Activated CD8-positive, alpha-beta T cell treated with anti-CD3 and anti-CD28 coated beads for 36 hours (primary cell): ENCODE measurements at regions of chr4 and their contacts with region 1.

Region 1: GRCh38 chr4:8176547-8177399 is 18.2 kb upstream of the ABLIM2 start:
- DNase-seq: peak; percentile 63
- ATAC-seq: peak; percentile 96
- H3K4me3 Mint-ChIP-seq: no peak overlapping the region
- H3K27ac Mint-ChIP-seq: no peak overlapping the region
- H3K4me1 Mint-ChIP-seq: peaks cover 9% of the 10 kb centered on the region
- H3K27me3 Mint-ChIP-seq: peaks cover 2% of the 10 kb centered on the region
- CTCF ChIP-seq: peak; percentile 78

Region 2: DNA sequence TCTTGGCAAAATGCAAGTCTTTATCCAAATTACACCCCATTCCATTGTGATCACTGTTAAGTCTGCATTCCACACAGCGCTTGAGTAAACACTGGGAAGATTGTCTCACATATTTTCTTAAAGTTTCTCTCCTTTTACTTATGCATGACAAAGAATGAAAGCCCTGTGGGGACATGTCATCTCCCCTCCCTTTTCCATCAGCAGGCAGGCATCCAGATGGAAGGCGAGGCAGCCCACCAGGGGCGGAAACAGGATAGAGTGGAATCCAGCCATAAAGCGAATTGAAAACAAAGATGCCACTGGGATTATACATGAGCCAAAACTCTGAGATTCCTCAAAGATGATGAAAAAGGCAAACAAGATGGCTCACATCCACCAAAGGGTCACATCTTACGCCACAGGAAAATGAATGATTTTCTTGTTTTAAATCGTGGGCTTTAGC is 315.3 kb before region 1 on chr4:
- CTCF ChIA-PET with region 1: no interaction called
- POLR2A ChIA-PET with region 1: no interaction called
- intact Hi-C with region 1: no loop called
- DNase-seq: no peak
- ATAC-seq: no peak
- H3K4me3 Mint-ChIP-seq: no peak overlapping the region
- H3K27ac Mint-ChIP-seq: no peak overlapping the region
- H3K4me1 Mint-ChIP-seq: peaks cover 29% of the 10 kb centered on the region
- H3K27me3 Mint-ChIP-seq: no peaks in the 10 kb centered on the region
- CTCF ChIP-seq: no peak

Region 3: DNA sequence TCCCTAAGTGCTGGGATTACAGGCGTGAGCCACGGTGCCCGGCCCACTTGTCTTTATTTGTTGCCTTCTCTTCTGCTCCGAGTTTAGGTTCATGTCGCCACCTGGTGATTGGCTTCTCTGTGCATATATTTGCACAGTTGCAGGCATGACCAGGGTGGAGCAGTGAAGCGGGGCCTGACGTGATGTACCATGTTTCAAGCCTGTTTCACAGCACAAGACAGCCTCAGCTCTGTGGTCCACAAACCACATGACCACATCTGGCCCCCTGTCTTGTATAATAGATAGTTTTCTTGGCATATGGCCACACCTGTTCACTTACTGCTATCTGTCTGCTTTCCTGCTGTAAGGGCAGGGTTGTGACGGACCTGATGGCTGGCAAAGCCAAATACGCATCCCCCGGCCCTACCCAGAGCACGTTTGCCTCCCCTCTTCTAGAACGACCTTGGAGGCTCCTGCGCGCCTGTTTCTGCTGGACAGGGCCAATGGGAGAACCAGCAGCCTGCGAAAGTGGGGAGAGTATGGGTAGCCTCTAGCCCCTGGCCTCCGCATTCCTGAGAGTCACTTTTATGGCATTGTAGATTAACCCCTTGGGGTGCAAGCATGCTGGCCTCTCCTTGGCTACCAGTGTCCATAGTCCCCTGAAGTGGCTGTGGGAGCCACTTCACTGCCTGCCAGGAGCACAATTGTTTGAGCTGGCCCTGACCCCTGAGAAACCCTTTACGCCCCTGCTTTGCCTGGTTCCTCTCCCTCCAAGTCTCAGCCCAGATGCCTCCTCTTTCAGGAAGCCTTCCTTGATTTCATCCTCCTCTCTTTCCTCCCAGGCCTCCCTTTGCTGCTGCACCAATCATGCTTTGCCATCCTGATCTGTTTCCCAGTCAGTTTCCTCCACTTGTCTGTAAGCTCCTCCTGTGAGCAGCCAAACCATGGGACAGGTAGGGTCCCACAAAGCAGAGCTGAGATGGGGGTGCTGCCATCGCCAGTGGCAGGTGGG is 16.3 kb after region 1 on chr4:
- CTCF ChIA-PET with region 1: interaction called, 27 read pairs
- POLR2A ChIA-PET with region 1: no interaction called
- intact Hi-C with region 1: no loop called
- DNase-seq: peak; percentile 69
- ATAC-seq: peak; percentile 90
- H3K4me3 Mint-ChIP-seq: no peak overlapping the region
- H3K27ac Mint-ChIP-seq: no peak overlapping the region
- H3K4me1 Mint-ChIP-seq: peaks cover 2% of the 10 kb centered on the region
- H3K27me3 Mint-ChIP-seq: no peaks in the 10 kb centered on the region
- CTCF ChIP-seq: no peak

Region 4: DNA sequence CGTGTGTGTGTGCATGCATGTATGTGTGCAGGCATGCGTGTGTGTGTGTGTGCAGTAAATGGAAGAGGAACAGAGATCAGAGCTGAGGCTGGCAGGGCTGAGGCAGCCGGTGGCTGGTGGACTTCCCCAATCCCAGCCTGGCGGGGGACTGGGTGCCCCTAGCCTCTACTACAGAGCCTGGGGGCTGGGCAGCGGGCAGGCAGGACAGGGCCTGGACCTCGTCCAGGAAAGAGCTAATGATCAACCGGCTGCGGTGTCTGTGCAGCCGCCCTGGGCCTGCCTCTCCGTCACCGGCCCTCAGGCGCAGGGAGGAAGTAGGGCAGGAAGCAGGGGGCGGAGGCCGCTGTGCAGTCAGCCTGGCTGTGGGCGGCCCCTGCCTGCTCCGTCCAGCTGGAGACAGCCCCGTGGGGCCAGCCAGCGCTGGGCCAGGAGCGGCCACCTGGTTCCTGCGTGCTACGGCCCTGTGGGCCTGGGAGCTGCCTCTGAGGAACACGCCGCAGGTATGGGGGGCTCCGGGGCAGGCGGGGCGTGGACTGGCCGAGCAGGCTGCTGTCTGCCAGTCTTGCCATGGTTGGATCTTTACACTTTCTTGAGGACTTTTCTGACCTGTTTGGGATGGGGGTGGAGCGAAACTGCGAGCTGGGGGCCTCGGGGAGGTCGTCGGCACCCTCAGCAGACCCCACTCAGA is 22.3 kb after region 1 on chr4 and contains the start of gene SH3TC1:
- CTCF ChIA-PET with region 1: interaction called, 27 read pairs
- POLR2A ChIA-PET with region 1: no interaction called
- intact Hi-C with region 1: no loop called
- DNase-seq: peak; percentile 82
- ATAC-seq: peak; percentile 78
- H3K4me3 Mint-ChIP-seq: peak within 1 kb of the TSS; percentile 83
- H3K27ac Mint-ChIP-seq: peak within 1 kb of the TSS; percentile 83
- H3K4me1 Mint-ChIP-seq: peaks cover 47% of the 10 kb centered on the region
- H3K27me3 Mint-ChIP-seq: no peaks in the 10 kb centered on the region
- CTCF ChIP-seq: no peak
- total RNA-seq, gene SH3TC1: 16.2 to 17.5 TPM

Region 5: GRCh38 chr4:8228319-8229250 is 51.8 kb after region 1 on chr4:
- CTCF ChIA-PET with region 1: interaction called, 13 read pairs
- POLR2A ChIA-PET with region 1: no interaction called
- intact Hi-C with region 1: no loop called
- DNase-seq: peak; percentile 95
- ATAC-seq: peak; percentile 79
- H3K4me3 Mint-ChIP-seq: peak overlapping the region; percentile 15
- H3K27ac Mint-ChIP-seq: peak overlapping the region; percentile 81
- H3K4me1 Mint-ChIP-seq: peaks cover 51% of the 10 kb centered on the region
- H3K27me3 Mint-ChIP-seq: no peaks in the 10 kb centered on the region
- CTCF ChIP-seq: no peak

Region 6: DNA sequence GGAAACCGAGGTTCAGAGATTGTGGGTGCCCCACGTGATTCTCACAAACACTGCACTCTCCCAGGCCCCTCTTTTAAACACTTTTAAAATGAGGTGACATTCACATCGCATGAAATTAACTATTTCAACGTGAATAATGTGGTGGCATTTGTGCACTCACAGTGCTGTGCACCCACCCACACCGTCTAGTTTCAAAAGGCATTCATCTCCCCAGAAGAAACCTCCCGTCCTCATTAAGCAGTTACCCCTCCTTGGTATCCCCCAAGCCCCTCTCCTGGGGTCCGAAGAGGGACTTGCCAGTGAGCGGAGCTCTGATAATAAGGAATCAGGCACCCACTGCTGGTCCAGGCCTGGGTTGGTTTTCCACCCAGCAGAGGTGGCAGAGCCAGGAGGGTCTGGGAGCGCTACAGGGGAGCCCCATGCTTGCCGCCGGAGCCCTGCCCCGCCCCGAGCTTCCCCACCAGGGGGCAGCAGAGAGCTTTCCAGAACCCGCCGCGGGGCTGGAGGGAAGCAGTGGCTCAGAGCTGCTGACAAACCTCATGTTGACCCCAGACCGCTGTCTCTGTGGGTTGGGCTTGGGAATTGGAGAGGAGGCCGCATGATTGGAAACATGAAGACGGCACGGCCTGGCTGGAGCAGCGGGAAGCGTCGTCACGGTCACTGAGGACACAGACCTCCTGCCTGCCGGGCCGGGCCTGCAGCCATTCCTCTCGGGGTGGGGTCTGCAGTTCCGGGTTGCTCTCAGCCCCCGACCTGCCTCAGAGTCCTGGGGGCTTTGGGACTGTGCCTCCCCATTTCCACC is 65.3 kb after region 1 on chr4:
- CTCF ChIA-PET with region 1: interaction called, 11 read pairs
- POLR2A ChIA-PET with region 1: no interaction called
- intact Hi-C with region 1: no loop called
- DNase-seq: peak; percentile 88
- ATAC-seq: peak; percentile 92
- H3K4me3 Mint-ChIP-seq: no peak overlapping the region
- H3K27ac Mint-ChIP-seq: no peak overlapping the region
- H3K4me1 Mint-ChIP-seq: peaks cover 7% of the 10 kb centered on the region
- H3K27me3 Mint-ChIP-seq: no peaks in the 10 kb centered on the region
- CTCF ChIP-seq: peak; percentile 94

Region 7: GRCh38 chr4:8303485-8304301 is 126.9 kb after region 1 on chr4:
- CTCF ChIA-PET with region 1: no interaction called
- POLR2A ChIA-PET with region 1: no interaction called
- intact Hi-C with region 1: no loop called
- DNase-seq: no peak
- ATAC-seq: no peak
- H3K4me3 Mint-ChIP-seq: no peak overlapping the region
- H3K27ac Mint-ChIP-seq: peak overlapping the region; percentile 12
- H3K4me1 Mint-ChIP-seq: no peaks in the 10 kb centered on the region
- H3K27me3 Mint-ChIP-seq: peaks cover 3% of the 10 kb centered on the region
- CTCF ChIP-seq: no peak

Region 8: DNA sequence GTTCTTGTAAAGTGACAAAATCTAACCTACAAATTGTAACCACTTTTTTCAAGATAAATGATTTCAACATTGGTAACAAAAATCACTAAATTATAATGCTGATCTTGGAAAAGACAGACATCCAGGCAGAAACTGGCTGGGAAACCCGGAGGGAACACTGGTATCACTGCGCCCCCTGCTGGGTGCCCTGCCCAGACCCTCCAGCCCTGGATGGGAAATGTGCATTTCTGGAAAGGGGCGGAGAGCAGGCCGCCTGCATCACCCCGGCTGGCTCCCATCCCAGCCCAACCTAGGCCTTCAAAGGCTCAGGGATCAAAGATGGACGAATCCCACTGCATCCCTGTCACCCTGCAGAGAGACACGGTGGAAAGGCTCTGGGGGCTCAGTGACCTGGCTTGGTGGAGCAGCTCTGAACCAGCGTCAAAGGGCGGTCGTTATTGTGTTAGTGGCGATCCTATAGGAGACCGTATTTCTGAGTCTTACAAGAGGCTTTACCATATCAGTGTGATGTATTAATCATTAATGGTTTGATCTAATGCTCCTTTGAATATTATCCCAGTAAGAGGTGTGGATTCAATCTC is 226.5 kb after region 1 on chr4:
- CTCF ChIA-PET with region 1: interaction called, 23 read pairs
- POLR2A ChIA-PET with region 1: no interaction called
- intact Hi-C with region 1: loop called (anchors 10 kb)
- DNase-seq: peak; percentile 63
- ATAC-seq: peak; percentile 67
- H3K4me3 Mint-ChIP-seq: no peak overlapping the region
- H3K27ac Mint-ChIP-seq: no peak overlapping the region
- H3K4me1 Mint-ChIP-seq: no peaks in the 10 kb centered on the region
- H3K27me3 Mint-ChIP-seq: no peaks in the 10 kb centered on the region
- CTCF ChIP-seq: peak; percentile 79

Region 9: GRCh38 chr4:8409264-8410065 is 232.7 kb after region 1 on chr4:
- CTCF ChIA-PET with region 1: interaction called, 12 read pairs
- POLR2A ChIA-PET with region 1: no interaction called
- intact Hi-C with region 1: loop called (anchors 10 kb)
- DNase-seq: peak; percentile 58
- ATAC-seq: peak; percentile 82
- H3K4me3 Mint-ChIP-seq: no peak overlapping the region
- H3K27ac Mint-ChIP-seq: no peak overlapping the region
- H3K4me1 Mint-ChIP-seq: peaks cover 16% of the 10 kb centered on the region
- H3K27me3 Mint-ChIP-seq: no peaks in the 10 kb centered on the region
- CTCF ChIP-seq: no peak